ENCODE measurements at regions of chr22 and their contacts with region 1.

Region 1: GRCh38 chr22:19929586-19930550 is 11.7 kb upstream of the COMT start:
- DNase-seq: peak in 1 of 10 donors; percentile 48
- H3K4me3 ChIP-seq: no peak overlapping the region
- H3K27ac ChIP-seq: peak overlapping the region in 1 of 59 donors; percentile 60
- H3K27me3 ChIP-seq: no peaks in the 10 kb centered on the region
- CTCF ChIP-seq: no peak

Region 2: GRCh38 chr22:19868773-19869471 is 60.9 kb before region 1 on chr22:
- intact Hi-C with region 1: loop called in 1 of 2 experiments (anchors 10 kb)
- DNase-seq: peak in 8 of 10 donors; percentile 43 to 83 (median 64)
- H3K4me3 ChIP-seq: peak overlapping the region in 12 of 59 donors; percentile 3 to 40 (median 12)
- H3K27ac ChIP-seq: peak overlapping the region in 35 of 59 donors; percentile 4 to 80 (median 54)
- H3K27me3 ChIP-seq: no peaks in the 10 kb centered on the region
- CTCF ChIP-seq: no peak

Region 3: DNA sequence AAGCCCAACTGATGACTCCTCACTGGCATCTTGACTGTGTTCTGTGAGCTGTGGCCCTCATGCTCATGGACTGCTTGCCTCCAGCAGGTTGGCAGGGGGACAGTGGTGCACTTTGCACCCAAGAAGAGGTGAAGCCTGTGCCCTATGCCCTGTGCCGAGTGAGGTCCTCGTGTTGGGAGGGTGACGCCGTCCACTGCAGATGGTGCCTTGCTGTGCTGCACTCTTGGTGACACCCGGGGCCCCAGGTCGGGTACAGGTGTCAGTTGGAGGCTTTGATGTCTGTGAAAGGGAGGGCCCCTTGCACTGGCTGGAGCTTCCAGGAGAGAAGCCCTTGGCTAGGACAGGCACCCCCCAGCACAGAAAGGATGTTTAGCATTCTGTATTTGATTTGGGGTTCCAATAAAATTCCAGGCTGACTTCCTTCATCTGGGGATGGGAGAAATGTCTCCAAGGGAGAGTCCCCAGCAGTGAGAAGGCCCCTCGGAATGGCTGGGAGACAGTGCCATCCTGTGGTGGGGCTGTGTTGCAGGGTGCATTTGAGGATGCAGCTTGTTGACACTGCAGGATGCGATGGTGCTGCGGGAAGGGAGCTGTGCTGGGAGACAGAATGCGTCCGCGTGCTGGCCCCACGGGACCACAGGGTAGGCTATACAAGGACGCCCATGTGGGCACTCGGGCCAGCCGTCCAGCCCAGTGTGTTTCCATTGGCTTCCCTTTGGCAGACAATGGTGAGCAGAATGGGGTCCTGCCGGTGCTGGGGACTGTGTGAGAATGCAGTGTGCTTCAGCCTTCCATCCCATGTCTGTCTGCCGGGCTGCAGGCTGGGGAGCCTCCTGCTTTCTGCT is 199.3 kb after region 1 on chr22:
- intact Hi-C with region 1: no loop called
- DNase-seq: peak in 2 of 10 donors; percentile 23 to 47
- H3K4me3 ChIP-seq: peak overlapping the region in 1 of 59 donors; percentile 7
- H3K27ac ChIP-seq: peak overlapping the region in 41 of 59 donors; percentile 2 to 99 (median 60)
- H3K27me3 ChIP-seq: no peaks in the 10 kb centered on the region
- CTCF ChIP-seq: peak in 33 of 56 donors; percentile 9 to 44 (median 29)